CD14-positive monocyte (primary cell): ENCODE measurements at regions of chr3 and their contacts with region 1.

Region 1: DNA sequence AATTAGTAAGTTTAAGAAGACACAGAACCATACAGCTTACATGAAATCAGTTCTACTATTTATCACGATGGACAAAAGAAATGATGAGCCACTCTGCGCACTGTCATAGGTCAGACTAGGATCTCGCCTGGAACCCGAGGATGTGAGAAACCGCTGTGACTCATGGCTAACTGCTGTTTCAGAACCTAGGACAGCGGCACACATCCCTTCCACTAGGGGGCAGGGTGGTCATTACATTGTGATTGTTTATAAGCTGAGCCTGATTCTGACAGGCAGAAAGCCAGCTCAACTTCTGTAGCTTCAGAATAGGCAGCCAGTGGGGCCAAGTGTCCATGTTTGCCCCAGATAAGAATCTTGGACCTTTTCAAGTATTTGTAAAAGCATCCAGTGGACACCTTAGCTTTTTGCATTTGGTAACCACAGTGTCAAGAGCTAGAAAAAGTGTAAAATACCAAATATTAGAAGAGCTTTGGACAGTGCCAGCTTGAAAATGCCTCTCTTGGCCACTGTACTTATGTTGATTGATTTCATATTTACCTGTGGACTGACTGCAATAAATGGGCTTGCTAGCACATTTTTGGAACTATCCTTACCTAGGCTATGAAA is 115.8 kb downstream of the KBTBD8 start:
- DNase-seq: peak; percentile 44 to 72 (median 64)
- H3K4me3 ChIP-seq: no peak overlapping the region
- H3K4me3 Mint-ChIP-seq: no peak overlapping the region
- H3K27ac ChIP-seq: no peak overlapping the region
- H3K27ac Mint-ChIP-seq: no peak overlapping the region
- H3K4me1 ChIP-seq: no peaks in the 10 kb centered on the region
- H3K4me1 Mint-ChIP-seq: no peaks in the 10 kb centered on the region
- H3K27me3 ChIP-seq: no peaks in the 10 kb centered on the region
- H3K27me3 Mint-ChIP-seq: peaks cover 0 to 2% (median 2%) of the 10 kb centered on the region in 3 donors
- CTCF ChIP-seq: peak; percentile 92

Region 2: GRCh38 chr3:67783281-67784250 is 669.7 kb after region 1 on chr3:
- intact Hi-C with region 1: loop called (anchors 10 kb)
- DNase-seq: no peak
- H3K4me3 ChIP-seq: no peak overlapping the region
- H3K4me3 Mint-ChIP-seq: no peak overlapping the region
- H3K27ac ChIP-seq: no peak overlapping the region
- H3K27ac Mint-ChIP-seq: no peak overlapping the region
- H3K4me1 ChIP-seq: no peaks in the 10 kb centered on the region
- H3K4me1 Mint-ChIP-seq: no peaks in the 10 kb centered on the region
- H3K27me3 ChIP-seq: no peaks in the 10 kb centered on the region
- H3K27me3 Mint-ChIP-seq: peaks cover 0 to 3% (median 0%) of the 10 kb centered on the region in 3 donors
- CTCF ChIP-seq: no peak

Region 3: GRCh38 chr3:68876112-68876713 is 1762.3 kb after region 1 on chr3:
- intact Hi-C with region 1: loop called (anchors 5 kb)
- DNase-seq: peak; percentile 10 to 31 (median 22)
- H3K4me3 ChIP-seq: no peak overlapping the region
- H3K4me3 Mint-ChIP-seq: no peak overlapping the region
- H3K27ac ChIP-seq: no peak overlapping the region
- H3K27ac Mint-ChIP-seq: peak overlapping the region in 1 of 7 donors; percentile 48
- H3K4me1 ChIP-seq: no peaks in the 10 kb centered on the region
- H3K4me1 Mint-ChIP-seq: no peaks in the 10 kb centered on the region
- H3K27me3 ChIP-seq: no peaks in the 10 kb centered on the region
- H3K27me3 Mint-ChIP-seq: peaks cover 0 to 3% (median 2%) of the 10 kb centered on the region in 3 donors
- CTCF ChIP-seq: peak; percentile 83